ENCODE measurements at regions of chr15 and their contacts with region 1.

Region 1: GRCh38 chr15:63891079-63891767 is 57.5 kb upstream of the HERC1 start:
- DNase-seq: peak; percentile 88
- H3K4me3 ChIP-seq: no peak overlapping the region
- H3K27ac ChIP-seq: peak overlapping the region in 2 of 5 donors; percentile 30 to 48
- H3K4me1 ChIP-seq: peaks cover under 1 to 50% (median 9%) of the 10 kb centered on the region in 4 donors
- H3K27me3 ChIP-seq: no peaks in the 10 kb centered on the region
- CTCF ChIP-seq: peak in 5 of 7 experiments; percentile 72 to 88 (median 85)
- EP300 ChIP-seq: no peak
- POLR2A ChIP-seq: no peak

Region 2: GRCh38 chr15:63729115-63729884 is 161.9 kb before region 1 on chr15:
- intact Hi-C with region 1: no loop called
- DNase-seq: no peak
- H3K4me3 ChIP-seq: no peak overlapping the region
- H3K27ac ChIP-seq: no peak overlapping the region
- H3K4me1 ChIP-seq: no peaks in the 10 kb centered on the region
- H3K27me3 ChIP-seq: no peaks in the 10 kb centered on the region
- CTCF ChIP-seq: no peak
- EP300 ChIP-seq: no peak
- POLR2A ChIP-seq: no peak

Region 3: DNA sequence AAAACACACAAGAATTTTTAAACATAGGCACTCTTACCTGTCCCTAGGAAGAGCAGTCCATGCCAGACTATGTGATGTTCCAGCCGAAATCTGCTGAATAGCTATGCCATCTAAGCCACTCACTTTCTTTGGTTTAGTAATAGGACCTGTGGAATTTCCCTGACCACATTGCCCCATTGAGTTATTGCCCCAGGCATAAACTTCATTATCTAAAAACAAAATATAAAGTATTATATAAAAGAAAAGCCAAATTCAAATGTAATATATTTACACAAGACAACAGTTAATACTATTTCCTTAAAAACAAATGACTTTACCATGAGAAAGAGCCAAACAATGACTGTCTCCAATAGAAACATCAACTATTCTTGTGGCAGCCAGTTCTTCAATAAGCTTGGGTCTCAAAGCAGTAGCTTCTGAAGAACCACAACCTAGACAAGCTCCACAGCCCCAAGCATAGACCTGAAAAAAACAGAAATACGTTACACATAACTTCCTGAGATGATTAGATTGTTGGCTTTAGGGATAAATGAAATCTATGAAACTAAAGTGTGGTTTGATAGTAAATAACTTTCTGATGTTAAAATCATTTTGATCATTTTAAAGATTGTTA is 141.8 kb before region 1 on chr15:
- intact Hi-C with region 1: loop called (anchors 5 kb)
- DNase-seq: no peak
- H3K4me3 ChIP-seq: no peak overlapping the region
- H3K27ac ChIP-seq: no peak overlapping the region
- H3K4me1 ChIP-seq: no peaks in the 10 kb centered on the region
- H3K27me3 ChIP-seq: no peaks in the 10 kb centered on the region
- CTCF ChIP-seq: no peak
- EP300 ChIP-seq: no peak
- POLR2A ChIP-seq: no peak

Region 4: DNA sequence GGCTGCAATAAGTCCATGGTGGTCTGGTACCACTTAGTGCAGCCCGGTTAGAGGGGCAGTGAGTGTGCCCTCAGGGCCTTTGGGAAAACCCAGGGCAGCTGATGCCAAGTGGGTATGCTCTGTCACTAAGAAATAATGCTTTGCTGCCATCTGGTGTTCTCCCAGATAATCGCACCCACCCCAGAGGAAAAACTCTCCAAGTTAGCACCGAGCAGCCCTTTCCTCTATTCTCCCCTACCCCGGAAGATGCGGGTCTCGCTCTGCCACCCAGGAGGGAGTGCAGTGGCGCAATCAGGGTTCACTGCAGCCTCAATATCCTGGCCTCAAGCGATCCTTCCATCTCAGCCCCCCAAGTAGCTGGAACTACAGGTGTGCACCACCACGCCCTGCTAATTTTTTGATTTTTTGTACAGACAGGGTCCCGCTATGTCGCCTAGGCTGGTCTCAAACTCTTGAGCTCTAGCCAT is 176.4 kb after region 1 on chr15:
- intact Hi-C with region 1: loop called (anchors 10 kb)
- DNase-seq: peak; percentile 72 to 83
- H3K4me3 ChIP-seq: no peak overlapping the region
- H3K27ac ChIP-seq: no peak overlapping the region
- H3K4me1 ChIP-seq: peaks cover 24 to 41% (median 29%) of the 10 kb centered on the region in 4 donors
- H3K27me3 ChIP-seq: no peaks in the 10 kb centered on the region
- CTCF ChIP-seq: peak in 5 of 7 experiments; percentile 76 to 91 (median 77)
- EP300 ChIP-seq: no peak
- POLR2A ChIP-seq: no peak